Naive thymus-derived CD4-positive, alpha-beta T cell (primary cell): ENCODE measurements at regions of chr3 and their contacts with region 1.

Region 1: DNA sequence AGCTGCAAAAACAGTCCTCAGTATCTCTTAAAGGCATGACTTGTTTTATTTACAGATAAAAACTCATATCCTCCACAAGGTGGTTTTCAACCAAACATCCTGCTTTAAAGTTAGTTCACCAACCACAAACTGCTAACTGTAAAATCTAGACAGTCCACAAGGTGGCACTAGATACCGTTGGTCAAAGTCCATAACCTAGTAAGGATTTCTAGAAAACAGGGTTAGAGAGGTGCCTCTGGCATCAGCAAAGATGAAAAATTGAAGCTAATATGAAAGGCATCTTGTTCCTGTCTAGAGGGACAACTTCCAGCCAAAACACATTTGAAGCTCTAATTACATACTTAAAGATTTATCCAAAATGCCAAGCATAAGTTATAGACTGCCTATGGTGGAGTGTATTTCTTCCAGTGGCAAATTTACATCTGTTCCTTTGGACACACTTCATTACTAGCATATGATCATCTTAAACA is 56.0 kb downstream of the ZMAT3 start:
- DNase-seq: peak in 8 of 9 donors; percentile 41 to 87 (median 82)
- ATAC-seq: peak; percentile 99
- H3K4me3 ChIP-seq: no peak overlapping the region
- H3K4me3 Mint-ChIP-seq: peak overlapping the region in 1 of 10 donors; percentile 35
- H3K27ac ChIP-seq: no peak overlapping the region
- H3K27ac Mint-ChIP-seq: peak overlapping the region in 5 of 9 donors; percentile 2 to 53 (median 32)
- H3K4me1 ChIP-seq: peaks cover 0 to 20% of the 10 kb centered on the region in 2 donors
- H3K4me1 Mint-ChIP-seq: peaks cover 15 to 42% (median 41%) of the 10 kb centered on the region in 7 donors
- H3K27me3 ChIP-seq: no peaks in the 10 kb centered on the region
- H3K27me3 Mint-ChIP-seq: peaks cover 0 to 19% (median 0%) of the 10 kb centered on the region in 5 donors

Region 2: GRCh38 chr3:178159691-178160220 is 855.8 kb before region 1 on chr3:
- CTCF ChIA-PET with region 1: no interaction called
- POLR2A ChIA-PET with region 1: no interaction called
- intact Hi-C with region 1: no loop called
- DNase-seq: no peak
- ATAC-seq: no peak
- H3K4me3 ChIP-seq: no peak overlapping the region
- H3K4me3 Mint-ChIP-seq: no peak overlapping the region
- H3K27ac ChIP-seq: no peak overlapping the region
- H3K27ac Mint-ChIP-seq: no peak overlapping the region
- H3K4me1 ChIP-seq: no peaks in the 10 kb centered on the region
- H3K4me1 Mint-ChIP-seq: peaks cover 0 to 6% (median 0%) of the 10 kb centered on the region in 7 donors
- H3K27me3 ChIP-seq: no peaks in the 10 kb centered on the region
- H3K27me3 Mint-ChIP-seq: peaks cover 0 to 6% (median 0%) of the 10 kb centered on the region in 5 donors

Region 3: GRCh38 chr3:179027326-179027900 is 11.8 kb after region 1 on chr3:
- CTCF ChIA-PET with region 1: interaction called, 15 read pairs
- POLR2A ChIA-PET with region 1: no interaction called
- intact Hi-C with region 1: loop called (anchors 1 kb)
- DNase-seq: peak in 7 of 9 donors; percentile 20 to 47 (median 31)
- ATAC-seq: peak; percentile 72
- H3K4me3 ChIP-seq: no peak overlapping the region
- H3K4me3 Mint-ChIP-seq: peak overlapping the region; percentile 47 to 86 (median 72)
- H3K27ac ChIP-seq: peak overlapping the region; percentile 58
- H3K27ac Mint-ChIP-seq: peak overlapping the region; percentile 76 to 97 (median 94)
- H3K4me1 ChIP-seq: peaks cover 0 to 26% of the 10 kb centered on the region in 2 donors
- H3K4me1 Mint-ChIP-seq: peaks cover 4 to 61% (median 42%) of the 10 kb centered on the region in 7 donors
- H3K27me3 ChIP-seq: no peaks in the 10 kb centered on the region
- H3K27me3 Mint-ChIP-seq: no peaks in the 10 kb centered on the region

Region 4: DNA sequence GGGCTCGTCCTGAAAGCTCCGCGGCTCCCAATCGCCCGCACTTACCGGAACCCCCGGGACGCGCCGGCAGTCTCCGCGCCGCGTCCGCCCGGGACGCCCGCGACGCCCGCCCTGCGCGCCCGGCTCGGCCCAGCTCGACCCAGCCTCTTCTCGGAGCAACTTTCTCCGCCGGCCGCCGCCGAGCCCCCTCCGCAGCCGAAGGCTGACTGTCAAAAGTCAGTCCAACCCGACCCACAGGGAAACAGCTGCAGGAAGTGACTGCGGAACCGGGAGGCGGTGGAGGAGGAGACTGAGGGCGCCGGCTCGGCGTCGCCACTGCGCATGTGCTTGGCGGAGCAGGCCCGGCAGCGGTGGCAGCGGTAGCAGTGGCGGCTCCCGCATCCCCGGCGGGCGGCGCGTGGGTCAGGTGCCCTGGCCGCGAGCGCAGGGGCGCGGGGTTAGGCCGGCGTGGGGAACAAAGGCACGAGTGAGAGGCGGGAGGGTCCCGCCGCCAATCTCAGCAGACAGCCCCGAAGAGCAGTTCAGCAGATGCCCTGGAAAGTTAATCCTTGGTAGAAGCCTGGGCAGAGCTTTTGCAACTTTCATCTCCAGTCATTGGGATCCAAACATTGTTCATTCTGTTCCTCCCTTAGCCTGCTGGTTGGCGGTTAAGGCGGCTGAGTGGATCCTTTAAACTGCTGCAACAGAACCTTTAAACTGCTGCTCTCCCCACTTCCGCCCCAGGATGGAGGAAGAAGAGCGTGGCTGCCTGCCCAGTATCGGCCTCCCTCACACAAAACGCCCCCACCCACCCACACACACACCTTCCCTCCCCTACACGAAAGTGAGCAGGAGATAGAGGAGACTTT is 56.2 kb after region 1 on chr3 and contains the start of gene ZMAT3:
- CTCF ChIA-PET with region 1: interaction called, 9 read pairs
- POLR2A ChIA-PET with region 1: interaction called, 5 read pairs
- intact Hi-C with region 1: loop called (anchors 1 kb)
- DNase-seq: peak; percentile 72 to 88 (median 83)
- ATAC-seq: peak; percentile 88
- H3K4me3 ChIP-seq: peak within 1 kb of the TSS; percentile 74
- H3K4me3 Mint-ChIP-seq: peak within 1 kb of the TSS; percentile 97 to 100 (median 98)
- H3K27ac ChIP-seq: peak within 1 kb of the TSS; percentile 87
- H3K27ac Mint-ChIP-seq: peak within 1 kb of the TSS; percentile 89 to 98 (median 95)
- H3K4me1 ChIP-seq: peaks cover 13 to 18% of the 10 kb centered on the region in 2 donors
- H3K4me1 Mint-ChIP-seq: peaks cover 24 to 81% (median 59%) of the 10 kb centered on the region in 7 donors
- H3K27me3 ChIP-seq: no peaks in the 10 kb centered on the region
- H3K27me3 Mint-ChIP-seq: no peaks in the 10 kb centered on the region
- total RNA-seq, gene ZMAT3: 20.6 to 23.7 (median 21.7) TPM

Region 5: GRCh38 chr3:179105881-179106280 is 90.3 kb after region 1 on chr3:
- CTCF ChIA-PET with region 1: no interaction called
- POLR2A ChIA-PET with region 1: no interaction called
- intact Hi-C with region 1: loop called (anchors 1 kb)
- DNase-seq: no peak
- ATAC-seq: no peak
- H3K4me3 ChIP-seq: no peak overlapping the region
- H3K4me3 Mint-ChIP-seq: no peak overlapping the region
- H3K27ac ChIP-seq: no peak overlapping the region
- H3K27ac Mint-ChIP-seq: peak overlapping the region in 1 of 9 donors; percentile 84
- H3K4me1 ChIP-seq: no peaks in the 10 kb centered on the region
- H3K4me1 Mint-ChIP-seq: peaks cover 0 to 5% (median 3%) of the 10 kb centered on the region in 7 donors
- H3K27me3 ChIP-seq: no peaks in the 10 kb centered on the region
- H3K27me3 Mint-ChIP-seq: peaks cover 0 to 12% (median 5%) of the 10 kb centered on the region in 5 donors

Region 6: GRCh38 chr3:179272385-179272784 is 256.8 kb after region 1 on chr3:
- CTCF ChIA-PET with region 1: interaction called, 3 read pairs
- POLR2A ChIA-PET with region 1: no interaction called
- intact Hi-C with region 1: loop called in 1 of 2 experiments (anchors 1 kb)
- DNase-seq: no peak
- ATAC-seq: no peak
- H3K4me3 ChIP-seq: no peak overlapping the region
- H3K4me3 Mint-ChIP-seq: no peak overlapping the region
- H3K27ac ChIP-seq: no peak overlapping the region
- H3K27ac Mint-ChIP-seq: no peak overlapping the region
- H3K4me1 ChIP-seq: no peaks in the 10 kb centered on the region
- H3K4me1 Mint-ChIP-seq: peaks cover 0 to 2% (median 0%) of the 10 kb centered on the region in 7 donors
- H3K27me3 ChIP-seq: no peaks in the 10 kb centered on the region
- H3K27me3 Mint-ChIP-seq: peaks cover 6 to 15% (median 8%) of the 10 kb centered on the region in 5 donors

Region 7: GRCh38 chr3:179451265-179452175 is 435.9 kb after region 1 on chr3 and contains the start of gene GNB4:
- CTCF ChIA-PET with region 1: no interaction called
- POLR2A ChIA-PET with region 1: no interaction called
- intact Hi-C with region 1: loop called in 1 of 2 experiments (anchors 2 kb)
- DNase-seq: peak in 8 of 9 donors; percentile 8 to 72 (median 32)
- ATAC-seq: peak; percentile 91
- H3K4me3 ChIP-seq: peak within 1 kb of the TSS; percentile 39
- H3K4me3 Mint-ChIP-seq: peak within 1 kb of the TSS; percentile 77 to 90 (median 86)
- H3K27ac ChIP-seq: no peak within 1 kb of the TSS
- H3K27ac Mint-ChIP-seq: peak within 1 kb of the TSS in 2 of 9 donors; percentile 62 to 84
- H3K4me1 ChIP-seq: peaks cover 0 to 10% of the 10 kb centered on the region in 2 donors
- H3K4me1 Mint-ChIP-seq: peaks cover 14 to 29% (median 23%) of the 10 kb centered on the region in 7 donors
- H3K27me3 ChIP-seq: peaks cover 4% of the 10 kb centered on the region in 2 donors
- H3K27me3 Mint-ChIP-seq: peaks cover 57 to 87% (median 75%) of the 10 kb centered on the region in 5 donors
- total RNA-seq, gene GNB4: 1.1 to 11.3 (median 2.1) TPM

Region 8: DNA sequence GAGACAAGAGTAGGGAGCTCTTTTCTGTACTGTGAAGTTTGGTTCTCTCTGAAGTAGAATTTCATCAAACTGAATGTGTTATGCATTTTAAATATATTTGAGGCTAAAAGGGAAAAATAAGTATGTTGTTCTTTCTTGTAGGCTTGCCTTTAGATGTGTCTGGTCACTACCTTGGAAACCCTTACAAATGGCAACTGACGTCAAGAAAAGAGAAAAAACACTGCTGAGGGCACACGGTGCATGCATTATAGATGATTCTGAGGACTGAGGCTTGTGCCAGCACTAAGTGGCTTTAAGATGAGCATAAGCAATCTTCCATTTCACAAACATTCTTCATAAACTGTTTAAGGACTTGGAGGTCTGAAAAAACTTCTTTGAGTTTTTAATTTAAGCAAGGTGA is 516.0 kb after region 1 on chr3:
- CTCF ChIA-PET with region 1: no interaction called
- POLR2A ChIA-PET with region 1: no interaction called
- intact Hi-C with region 1: no loop called
- DNase-seq: no peak
- ATAC-seq: no peak
- H3K4me3 ChIP-seq: no peak overlapping the region
- H3K4me3 Mint-ChIP-seq: no peak overlapping the region
- H3K27ac ChIP-seq: no peak overlapping the region
- H3K27ac Mint-ChIP-seq: no peak overlapping the region
- H3K4me1 ChIP-seq: no peaks in the 10 kb centered on the region
- H3K4me1 Mint-ChIP-seq: peaks cover 0 to 5% (median 0%) of the 10 kb centered on the region in 7 donors
- H3K27me3 ChIP-seq: no peaks in the 10 kb centered on the region
- H3K27me3 Mint-ChIP-seq: peaks cover 0 to 32% (median 16%) of the 10 kb centered on the region in 5 donors

Region 9: DNA sequence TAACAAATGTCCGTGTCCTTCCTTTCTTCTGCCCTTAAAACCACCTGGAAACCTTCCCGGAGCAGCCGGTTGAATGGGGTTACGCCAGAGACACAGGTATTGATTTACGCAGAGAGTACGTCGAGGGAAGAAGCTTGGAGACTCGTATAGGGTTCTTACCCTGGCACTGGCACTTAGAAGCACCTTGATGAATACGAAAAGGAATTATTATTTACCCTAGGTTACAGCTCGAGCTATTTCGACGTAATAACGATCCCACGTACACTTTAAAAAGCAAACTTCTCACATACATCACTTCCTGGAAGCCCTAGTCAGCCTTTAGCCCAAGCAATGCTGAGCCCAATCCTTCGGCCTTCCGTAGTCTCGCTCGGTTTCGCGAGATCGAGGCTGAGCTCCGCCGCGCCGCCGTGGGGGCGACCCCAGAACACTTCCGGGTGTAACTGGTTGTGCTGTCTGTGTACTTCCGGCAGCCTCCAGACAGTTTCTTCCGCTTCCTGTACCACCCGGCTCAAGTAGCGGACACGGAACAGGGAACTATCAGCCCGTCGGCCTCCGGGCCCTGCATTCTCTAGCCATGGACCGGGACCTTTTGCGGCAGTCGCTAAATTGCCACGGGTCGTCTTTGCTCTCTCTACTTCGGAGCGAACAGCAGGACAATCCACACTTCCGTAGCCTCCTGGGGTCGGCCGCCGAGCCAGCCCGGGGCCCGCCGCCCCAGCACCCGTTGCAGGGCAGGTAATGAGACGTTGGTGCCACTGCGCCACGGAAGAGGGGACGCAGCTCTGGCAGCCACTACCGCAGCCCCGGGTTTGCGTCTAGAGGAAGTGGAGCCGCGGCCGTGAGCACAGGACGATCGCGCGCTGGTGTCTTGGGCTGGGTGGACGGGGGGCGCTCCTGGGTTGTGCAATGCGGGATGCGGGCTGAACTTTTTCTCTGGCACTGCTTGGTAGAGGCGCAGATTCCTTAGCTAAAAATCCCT is 1586.4 kb after region 1 on chr3 and contains the start of gene TTC14:
- CTCF ChIA-PET with region 1: no interaction called
- POLR2A ChIA-PET with region 1: no interaction called
- intact Hi-C with region 1: loop called in 1 of 2 experiments (anchors 10 kb)
- DNase-seq: peak; percentile 80 to 94 (median 92)
- ATAC-seq: peak; percentile 94
- H3K4me3 ChIP-seq: peak within 1 kb of the TSS; percentile 92
- H3K4me3 Mint-ChIP-seq: peak within 1 kb of the TSS; percentile 88 to 98 (median 96)
- H3K27ac ChIP-seq: peak within 1 kb of the TSS; percentile 88
- H3K27ac Mint-ChIP-seq: peak within 1 kb of the TSS; percentile 92 to 99 (median 97)
- H3K4me1 ChIP-seq: peaks cover 12% of the 10 kb centered on the region in 2 donors
- H3K4me1 Mint-ChIP-seq: peaks cover 14 to 47% (median 39%) of the 10 kb centered on the region in 7 donors
- H3K27me3 ChIP-seq: no peaks in the 10 kb centered on the region
- H3K27me3 Mint-ChIP-seq: peaks cover 4 to 23% (median 18%) of the 10 kb centered on the region in 5 donors
- total RNA-seq, gene TTC14: 76.5 to 201 (median 103) TPM